Endothelial cell of umbilical vein (primary cell): ENCODE measurements at regions of chr15 and their contacts with region 1.

Region 1: DNA sequence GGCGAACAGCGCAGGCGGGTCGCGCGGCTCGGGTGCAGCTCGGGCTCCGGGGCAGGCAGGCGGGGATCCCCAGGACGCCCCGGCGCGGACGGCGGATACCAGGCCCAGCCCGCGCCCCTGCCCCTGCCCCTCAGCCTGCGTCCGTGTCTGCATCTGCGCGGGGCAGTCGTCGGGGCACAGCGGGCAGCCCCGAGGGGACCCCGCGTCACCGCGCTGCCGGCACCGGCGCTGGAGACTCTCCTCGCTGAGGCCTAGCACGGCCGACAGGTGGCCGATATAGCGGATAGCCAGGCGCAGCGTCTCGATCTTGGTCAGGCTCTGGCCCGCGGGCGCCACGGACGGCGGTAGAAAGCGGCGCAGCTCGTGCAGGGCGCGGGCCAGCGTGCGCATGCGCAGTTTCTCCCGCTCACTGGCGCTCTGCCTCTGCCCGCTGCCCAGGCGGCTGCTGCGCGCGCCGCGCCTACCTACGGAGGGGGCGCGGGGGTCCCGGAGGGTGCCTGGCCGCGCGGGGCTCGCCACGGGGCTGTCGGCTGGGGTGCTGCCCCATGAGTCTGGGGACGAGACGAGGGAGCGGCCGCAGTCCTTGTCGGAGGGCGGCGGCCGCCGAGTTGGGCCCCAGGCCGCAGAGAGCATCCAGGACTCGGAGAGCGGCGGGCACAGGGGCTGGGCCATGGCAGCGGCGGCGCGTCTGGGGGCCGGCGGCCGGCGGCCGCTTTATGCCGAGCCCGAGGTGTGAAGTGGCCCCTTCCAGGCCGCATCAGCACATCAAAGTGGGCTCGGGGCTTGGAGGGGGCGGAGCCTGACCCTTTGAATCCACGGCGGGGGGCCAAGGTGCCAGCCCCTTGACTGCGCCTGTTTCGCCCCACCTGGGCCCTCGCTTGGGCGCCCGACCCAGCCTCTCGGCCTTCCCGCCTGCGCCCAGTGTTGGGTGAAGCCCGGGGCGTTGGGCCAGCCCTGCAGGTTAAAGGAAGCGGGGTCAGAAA is at the start of gene MESP1:
- DNase-seq: peak; percentile 91
- H3K4me3 ChIP-seq: peak within 1 kb of the TSS; percentile 38 to 48 (median 46)
- H3K27ac ChIP-seq: no peak within 1 kb of the TSS
- H3K4me1 ChIP-seq: peaks cover 6% of the 10 kb centered on the region
- H3K27me3 ChIP-seq: peaks cover 3 to 12% of the 10 kb centered on the region in 2 experiments
- CTCF ChIP-seq: peak; percentile 66 to 90
- POLR2A ChIP-seq: peak; percentile 42
- total RNA-seq, gene MESP1: 1.0 and 1.7 TPM in 2 replicates

Region 2: GRCh38 chr15:89888214-89888804 is 137.5 kb after region 1 on chr15:
- CTCF ChIA-PET with region 1: interaction called, 24 read pairs
- POLR2A ChIA-PET with region 1: no interaction called
- dilution Hi-C with region 1: no loop called
- intact Hi-C with region 1: no loop called
- DNase-seq: peak; percentile 56
- H3K4me3 ChIP-seq: no peak overlapping the region
- H3K27ac ChIP-seq: no peak overlapping the region
- H3K4me1 ChIP-seq: peaks cover 5% of the 10 kb centered on the region
- H3K27me3 ChIP-seq: no peaks in the 10 kb centered on the region
- CTCF ChIP-seq: peak; percentile 38 to 55
- POLR2A ChIP-seq: no peak